ENCODE measurements at regions of chr1 and their contacts with region 1.

Region 1: DNA sequence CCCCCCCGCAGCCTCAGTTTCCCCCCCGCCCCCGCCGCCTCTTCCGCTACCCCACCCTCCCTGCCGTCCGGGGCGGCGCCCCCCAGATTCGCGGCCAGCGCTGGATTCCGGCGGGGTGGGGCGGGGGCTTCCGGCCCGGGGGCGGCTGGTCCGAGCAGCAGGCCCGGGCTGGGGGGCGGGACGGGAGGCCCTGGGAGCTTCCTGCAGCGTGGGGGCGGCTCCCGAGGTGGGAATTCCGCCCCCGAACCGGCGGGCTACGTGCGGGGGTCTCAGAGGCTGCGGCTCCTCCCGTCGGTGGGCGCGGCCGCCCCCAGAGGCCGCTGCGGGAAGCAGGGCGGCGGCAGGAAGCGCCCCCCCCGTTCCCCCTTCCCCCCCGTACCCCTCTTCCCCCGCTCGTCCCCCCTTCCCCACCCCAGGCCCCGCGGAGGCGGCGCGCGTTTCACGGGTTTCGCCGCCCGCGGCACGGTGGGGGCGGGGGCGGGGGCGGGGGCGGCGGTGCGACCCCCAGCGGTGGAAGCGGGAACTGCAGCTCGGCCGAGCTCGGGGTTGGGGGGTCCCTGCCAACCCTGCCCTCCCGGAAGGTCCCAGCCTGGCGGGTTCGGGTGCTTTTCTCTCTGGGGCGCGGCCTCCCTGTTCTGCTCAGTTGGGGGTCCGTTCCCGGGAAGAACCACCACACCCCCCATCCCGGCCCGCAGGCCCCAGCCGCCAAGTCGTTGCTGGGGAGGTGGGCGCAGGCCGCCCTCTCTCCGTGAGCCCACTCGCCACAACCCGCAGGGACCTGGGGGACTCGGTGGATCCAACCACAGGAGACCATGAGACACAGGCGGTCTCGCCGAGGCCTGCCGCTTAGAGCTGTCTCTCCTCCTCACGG is 76.3 kb downstream of the MORN1 start:
- DNase-seq: peak; percentile 81
- ATAC-seq: peak; percentile 59
- H3K4me3 ChIP-seq: peak overlapping the region in 4 of 5 experiments; percentile 51 to 71 (median 59)
- H3K4me3 Mint-ChIP-seq: peak overlapping the region; percentile 69
- H3K27ac ChIP-seq: peak overlapping the region; percentile 84 to 91
- H3K27ac Mint-ChIP-seq: peak overlapping the region; percentile 77
- H3K4me1 ChIP-seq: peaks cover 44 to 53% of the 10 kb centered on the region in 2 donors
- H3K4me1 Mint-ChIP-seq: peaks cover 35% of the 10 kb centered on the region
- H3K27me3 ChIP-seq: no peaks in the 10 kb centered on the region
- H3K27me3 Mint-ChIP-seq: no peaks in the 10 kb centered on the region
- CTCF ChIP-seq: peak; percentile 95

Region 2: GRCh38 chr1:1109743-1110142 is 1205.3 kb before region 1 on chr1:
- CTCF ChIA-PET with region 1: no interaction called
- POLR2A ChIA-PET with region 1: no interaction called
- intact Hi-C with region 1: no loop called
- DNase-seq: no peak
- ATAC-seq: no peak
- H3K4me3 ChIP-seq: no peak overlapping the region
- H3K4me3 Mint-ChIP-seq: no peak overlapping the region
- H3K27ac ChIP-seq: no peak overlapping the region
- H3K27ac Mint-ChIP-seq: no peak overlapping the region
- H3K4me1 ChIP-seq: no peaks in the 10 kb centered on the region
- H3K4me1 Mint-ChIP-seq: peaks cover 6% of the 10 kb centered on the region
- H3K27me3 ChIP-seq: no peaks in the 10 kb centered on the region
- H3K27me3 Mint-ChIP-seq: no peaks in the 10 kb centered on the region
- CTCF ChIP-seq: no peak

Region 3: GRCh38 chr1:2227346-2228153 is 87.5 kb before region 1 on chr1:
- CTCF ChIA-PET with region 1: interaction called, 21 read pairs
- POLR2A ChIA-PET with region 1: interaction called, 4 read pairs
- intact Hi-C with region 1: no loop called
- DNase-seq: peak; percentile 98
- ATAC-seq: peak; percentile 91
- H3K4me3 ChIP-seq: peak overlapping the region in 4 of 5 experiments; percentile 50 to 65 (median 60)
- H3K4me3 Mint-ChIP-seq: peak overlapping the region; percentile 80
- H3K27ac ChIP-seq: peak overlapping the region; percentile 57 to 83
- H3K27ac Mint-ChIP-seq: peak overlapping the region; percentile 83
- H3K4me1 ChIP-seq: peaks cover 35 to 43% of the 10 kb centered on the region in 2 donors
- H3K4me1 Mint-ChIP-seq: peaks cover 37% of the 10 kb centered on the region
- H3K27me3 ChIP-seq: no peaks in the 10 kb centered on the region
- H3K27me3 Mint-ChIP-seq: no peaks in the 10 kb centered on the region
- CTCF ChIP-seq: no peak

Region 4: DNA sequence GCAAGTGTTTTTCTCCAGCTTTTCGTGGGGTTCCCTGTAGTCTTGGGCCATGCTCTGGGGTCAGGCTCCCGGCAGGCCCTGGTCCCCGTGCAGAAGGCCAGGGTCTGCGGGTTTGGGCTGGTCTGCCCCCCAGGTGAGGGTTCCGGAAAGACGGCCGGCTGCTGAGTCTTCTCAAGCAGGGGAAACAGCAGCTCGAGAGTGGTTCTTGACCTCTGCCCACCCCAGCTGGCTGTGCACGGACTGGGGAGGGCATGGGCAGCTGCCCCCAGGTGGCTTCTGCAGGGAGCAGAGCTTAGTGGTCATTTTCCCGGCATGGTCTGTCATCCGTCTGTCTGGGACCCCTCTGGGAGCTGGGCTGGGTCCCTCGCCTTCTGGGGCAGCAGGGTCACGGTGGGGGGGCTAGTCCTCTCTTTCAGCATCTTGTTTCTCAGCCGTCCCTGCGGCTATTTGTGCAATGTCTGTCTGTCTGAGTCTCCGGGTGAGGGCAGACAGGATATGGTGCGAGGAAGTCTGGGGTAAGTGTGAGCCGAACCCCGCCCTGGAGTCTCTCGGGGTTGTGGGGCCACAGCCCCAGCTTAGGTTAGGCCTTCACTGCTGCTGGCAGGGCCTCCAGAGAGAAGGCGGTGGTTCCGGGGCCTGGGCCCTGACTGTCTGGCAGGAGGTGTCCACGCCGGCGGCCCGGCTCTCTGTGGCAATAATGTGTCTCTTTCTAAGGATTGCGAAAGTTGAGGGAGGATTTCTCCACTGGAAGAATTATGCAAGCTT is 80.9 kb before region 1 on chr1:
- CTCF ChIA-PET with region 1: interaction called, 21 read pairs
- POLR2A ChIA-PET with region 1: interaction called, 5 read pairs
- intact Hi-C with region 1: no loop called
- DNase-seq: peak; percentile 78
- ATAC-seq: peak; percentile 79
- H3K4me3 ChIP-seq: peak overlapping the region in 4 of 5 experiments; percentile 3 to 49 (median 36)
- H3K4me3 Mint-ChIP-seq: peak overlapping the region; percentile 86
- H3K27ac ChIP-seq: peak overlapping the region; percentile 31 to 93
- H3K27ac Mint-ChIP-seq: peak overlapping the region; percentile 97
- H3K4me1 ChIP-seq: peaks cover 77 to 96% of the 10 kb centered on the region in 2 donors
- H3K4me1 Mint-ChIP-seq: peaks cover 81% of the 10 kb centered on the region
- H3K27me3 ChIP-seq: no peaks in the 10 kb centered on the region
- H3K27me3 Mint-ChIP-seq: no peaks in the 10 kb centered on the region
- CTCF ChIP-seq: no peak

Region 5: GRCh38 chr1:2290595-2291510 is 24.2 kb before region 1 on chr1:
- CTCF ChIA-PET with region 1: interaction called, 8 read pairs
- POLR2A ChIA-PET with region 1: interaction called, 9 read pairs
- intact Hi-C with region 1: loop called (anchors 2 kb)
- DNase-seq: peak; percentile 89
- ATAC-seq: peak; percentile 81
- H3K4me3 ChIP-seq: peak overlapping the region in 4 of 5 experiments; percentile 36 to 54 (median 42)
- H3K4me3 Mint-ChIP-seq: peak overlapping the region; percentile 83
- H3K27ac ChIP-seq: peak overlapping the region; percentile 29 to 73
- H3K27ac Mint-ChIP-seq: peak overlapping the region; percentile 84
- H3K4me1 ChIP-seq: peaks cover 57 to 77% of the 10 kb centered on the region in 2 donors
- H3K4me1 Mint-ChIP-seq: peaks cover 79% of the 10 kb centered on the region
- H3K27me3 ChIP-seq: no peaks in the 10 kb centered on the region
- H3K27me3 Mint-ChIP-seq: no peaks in the 10 kb centered on the region
- CTCF ChIP-seq: no peak

Region 6: DNA sequence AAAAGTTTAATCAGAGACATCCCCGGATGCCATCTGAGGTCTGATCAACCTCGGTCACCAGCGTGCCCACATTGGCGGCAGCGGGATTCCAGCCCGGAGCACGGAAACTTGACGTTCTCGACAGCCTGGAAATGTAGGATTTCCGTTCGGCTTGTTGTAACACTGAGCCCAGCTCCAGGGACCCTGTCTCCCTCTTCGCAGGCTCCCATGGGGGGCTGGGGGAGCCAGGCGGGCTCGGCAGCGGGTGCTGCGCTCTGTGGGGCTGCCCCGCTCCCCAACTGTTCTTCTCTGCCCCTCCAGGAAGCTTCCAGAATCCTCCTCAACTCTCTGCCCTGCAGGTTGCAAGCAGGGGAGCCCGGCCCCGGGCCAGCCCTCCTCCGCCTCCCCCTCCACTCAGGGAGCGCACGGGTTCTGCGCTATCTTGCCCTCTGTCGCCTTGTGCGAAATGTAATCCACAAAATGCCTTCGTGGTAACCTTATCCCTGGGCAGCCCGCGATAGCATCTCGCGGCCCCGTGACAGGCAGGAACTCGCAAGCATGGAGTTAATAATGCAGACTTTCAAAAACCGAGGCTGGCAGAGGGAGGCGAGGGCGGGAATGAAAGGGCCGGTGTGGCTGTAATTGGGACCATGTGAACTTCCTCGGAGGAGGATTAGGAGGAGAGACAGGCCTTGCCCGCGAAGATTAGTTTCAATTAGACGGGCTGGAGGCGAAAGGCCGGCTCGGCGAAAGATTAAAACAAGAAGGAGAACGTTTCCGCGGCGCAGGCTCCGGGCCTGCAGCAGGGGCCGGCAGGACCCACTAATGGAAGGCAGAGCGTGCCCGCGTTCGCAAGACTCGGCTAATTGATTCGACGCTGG is 540.4 kb after region 1 on chr1:
- CTCF ChIA-PET with region 1: no interaction called
- POLR2A ChIA-PET with region 1: no interaction called
- intact Hi-C with region 1: no loop called
- DNase-seq: no peak
- ATAC-seq: no peak
- H3K4me3 ChIP-seq: no peak overlapping the region
- H3K4me3 Mint-ChIP-seq: no peak overlapping the region
- H3K27ac ChIP-seq: no peak overlapping the region
- H3K27ac Mint-ChIP-seq: no peak overlapping the region
- H3K4me1 ChIP-seq: no peaks in the 10 kb centered on the region
- H3K4me1 Mint-ChIP-seq: no peaks in the 10 kb centered on the region
- H3K27me3 ChIP-seq: no peaks in the 10 kb centered on the region
- H3K27me3 Mint-ChIP-seq: no peaks in the 10 kb centered on the region
- CTCF ChIP-seq: no peak